ENCODE measurements at regions of chr1 and their contacts with region 1.

Region 1: GRCh38 chr1:151189638-151190445 is at the start of gene VPS72:
- DNase-seq: peak; percentile 89 to 95 (median 92)
- H3K4me3 ChIP-seq: peak within 1 kb of the TSS; percentile 66 to 97 (median 91)
- H3K27ac ChIP-seq: peak within 1 kb of the TSS; percentile 85 to 93
- H3K4me1 ChIP-seq: peaks cover 3 to 19% (median 11%) of the 10 kb centered on the region in 4 experiments
- H3K27me3 ChIP-seq: peaks cover 0 to 3% (median 0%) of the 10 kb centered on the region in 5 experiments

Region 2: GRCh38 chr1:151175910-151176309 is 13.9 kb before region 1 on chr1 and contains the start of gene TMOD4:
- CTCF ChIA-PET with region 1: interaction called, 22 read pairs
- POLR2A ChIA-PET with region 1: no interaction called
- DNase-seq: peak; percentile 45 to 72 (median 67)
- H3K4me3 ChIP-seq: no peak within 1 kb of the TSS
- H3K27ac ChIP-seq: no peak within 1 kb of the TSS
- H3K4me1 ChIP-seq: no peaks in the 10 kb centered on the region
- H3K27me3 ChIP-seq: no peaks in the 10 kb centered on the region

Region 3: DNA sequence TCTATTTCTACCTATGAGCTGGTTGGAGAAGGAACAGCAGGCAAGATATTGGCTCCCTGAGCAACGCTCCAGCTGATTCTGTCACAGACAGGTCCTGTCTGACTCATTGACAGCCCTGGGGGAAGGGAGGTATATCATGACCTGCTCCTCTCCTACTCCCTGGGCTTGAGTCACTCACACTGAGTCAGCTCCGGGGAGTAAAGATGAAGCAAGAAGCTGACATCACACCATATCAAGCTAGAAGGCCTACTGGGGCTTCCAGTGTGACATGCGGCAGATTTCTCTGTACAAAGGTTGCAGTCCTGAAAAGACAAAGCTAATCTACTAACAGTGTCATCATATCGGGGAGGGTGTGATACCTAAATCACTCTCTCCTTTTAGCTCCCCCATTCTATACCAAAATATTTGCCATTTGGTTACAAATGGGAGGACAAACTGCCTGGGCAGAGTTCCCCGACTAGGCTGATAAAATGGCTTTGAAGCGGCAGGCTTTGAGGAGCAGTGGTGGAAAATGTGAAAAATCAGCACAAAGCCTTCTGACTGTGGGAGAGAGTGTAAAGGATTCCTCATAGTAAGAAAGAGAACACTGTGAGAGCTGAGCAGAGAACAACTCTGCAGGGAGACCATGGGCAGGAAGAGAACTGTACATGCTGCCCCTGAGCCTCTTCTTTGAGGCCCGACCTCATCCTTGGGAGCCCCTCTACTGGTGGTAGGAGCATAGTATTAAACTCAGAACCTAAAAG is 121.9 kb after region 1 on chr1:
- CTCF ChIA-PET with region 1: no interaction called
- POLR2A ChIA-PET with region 1: no interaction called
- DNase-seq: peak in 2 of 3 donors; percentile 38 to 43
- H3K4me3 ChIP-seq: no peak overlapping the region
- H3K27ac ChIP-seq: peak overlapping the region in 1 of 2 experiments; percentile 56
- H3K4me1 ChIP-seq: no peaks in the 10 kb centered on the region
- H3K27me3 ChIP-seq: no peaks in the 10 kb centered on the region